AG04449 (cell line): ENCODE measurements at regions of chr12 and their contacts with region 1.

Region 1: GRCh38 chr12:93569656-93570551 is 2.6 kb upstream of the SOCS2 start:
- DNase-seq: no peak
- H3K4me3 ChIP-seq: peak overlapping the region; percentile 67
- CTCF ChIP-seq: peak; percentile 89

Region 2: GRCh38 chr12:92859650-92860386 is 710.1 kb before region 1 on chr12:
- CTCF ChIA-PET with region 1: no interaction called
- POLR2A ChIA-PET with region 1: no interaction called
- DNase-seq: no peak
- H3K4me3 ChIP-seq: no peak overlapping the region
- CTCF ChIP-seq: no peak

Region 3: DNA sequence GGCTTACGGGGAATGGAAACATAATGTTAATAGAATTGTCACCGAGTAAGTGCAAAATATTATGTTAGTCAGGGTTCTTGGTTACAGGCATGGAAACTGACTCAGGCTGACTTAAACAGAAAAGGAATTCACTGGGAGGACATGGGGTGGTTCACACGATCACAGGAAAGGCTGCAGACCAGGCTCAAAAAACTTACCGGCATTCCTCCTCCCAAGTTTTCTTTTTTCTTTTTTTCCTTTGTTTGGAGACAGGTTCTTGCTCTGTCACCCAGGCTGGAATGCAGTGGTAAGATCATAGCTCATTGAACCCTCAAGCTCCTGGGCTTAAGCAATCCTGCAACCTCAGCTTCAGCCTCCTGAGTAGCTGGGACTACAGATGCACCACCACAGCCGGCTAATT is 116.3 kb before region 1 on chr12:
- CTCF ChIA-PET with region 1: no interaction called
- POLR2A ChIA-PET with region 1: no interaction called
- DNase-seq: peak; percentile 23
- H3K4me3 ChIP-seq: no peak overlapping the region
- CTCF ChIP-seq: no peak

Region 4: GRCh38 chr12:93514853-93515252 is 55.1 kb before region 1 on chr12:
- CTCF ChIA-PET with region 1: interaction called, 10 read pairs
- POLR2A ChIA-PET with region 1: no interaction called
- DNase-seq: peak; percentile 68
- H3K4me3 ChIP-seq: no peak overlapping the region
- CTCF ChIP-seq: no peak

Region 5: DNA sequence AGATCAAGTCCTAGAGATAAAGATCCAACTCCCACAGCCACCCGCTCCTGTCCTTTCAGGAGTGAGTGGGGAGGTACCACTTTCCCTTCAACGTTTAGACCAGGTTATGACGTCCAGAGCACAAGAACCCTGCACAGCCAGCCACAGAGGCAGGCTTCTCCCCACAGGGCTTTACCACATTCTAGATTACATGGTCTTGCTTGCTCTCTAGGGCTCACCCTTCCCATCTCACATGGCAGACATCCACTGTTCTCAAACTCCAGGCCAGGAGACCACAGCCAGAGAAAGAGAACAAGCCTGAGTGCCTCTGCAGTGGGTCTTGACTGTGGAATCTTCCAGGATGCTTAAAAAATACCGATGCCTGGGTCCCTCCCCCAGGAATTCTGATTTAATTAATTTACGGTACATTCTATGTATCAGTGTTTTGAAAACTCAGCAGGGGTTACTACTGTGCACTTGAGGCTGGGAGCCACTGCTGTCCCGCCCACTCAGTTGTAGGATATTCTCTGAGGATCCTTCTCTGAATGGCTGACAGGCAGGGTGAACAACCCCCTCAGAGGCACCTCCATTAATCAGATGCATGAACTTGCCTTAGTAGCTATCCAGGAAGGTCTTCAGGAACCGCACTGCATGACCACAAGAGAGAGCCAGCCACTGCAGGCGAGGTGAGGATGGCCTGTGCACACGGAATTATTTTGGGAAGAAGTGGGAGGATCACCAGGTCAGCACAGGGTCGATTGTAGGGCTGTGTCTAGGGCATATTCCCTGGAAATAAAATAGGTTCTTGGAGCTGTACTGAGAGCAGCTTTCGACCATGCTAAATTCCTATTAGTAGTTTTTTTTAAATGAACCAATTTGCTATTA is 18.9 kb before region 1 on chr12:
- CTCF ChIA-PET with region 1: interaction called, 12 read pairs
- POLR2A ChIA-PET with region 1: no interaction called
- DNase-seq: no peak
- H3K4me3 ChIP-seq: no peak overlapping the region
- CTCF ChIP-seq: no peak

Region 6: GRCh38 chr12:93603762-93604161 is 33.9 kb after region 1 on chr12:
- CTCF ChIA-PET with region 1: no interaction called
- POLR2A ChIA-PET with region 1: no interaction called
- DNase-seq: no peak
- H3K4me3 ChIP-seq: no peak overlapping the region
- CTCF ChIP-seq: no peak

Region 7: GRCh38 chr12:93742110-93742934 is 172.4 kb after region 1 on chr12:
- CTCF ChIA-PET with region 1: interaction called, 10 read pairs
- POLR2A ChIA-PET with region 1: no interaction called
- DNase-seq: no peak
- H3K4me3 ChIP-seq: peak overlapping the region; percentile 61
- CTCF ChIP-seq: peak; percentile 13